GM18951 (cell line): ENCODE measurements at regions of chr14 and their contacts with region 1.

Region 1: GRCh38 chr14:39114073-39114838 is at the start of gene GEMIN2:
- POLR2A ChIP-seq: peak; percentile 89

Region 2: GRCh38 chr14:39432179-39432618 is 317.9 kb after region 1 on chr14 and contains the start of gene FBXO33:
- in situ Hi-C with region 1: loop called (anchors 25 kb)
- POLR2A ChIP-seq: peak; percentile 31